ENCODE measurements at regions of chr15 and their contacts with region 1.

Region 1: GRCh38 chr15:100602064-100602822 is at the starts of genes ASB7 and LINS1:
- DNase-seq: peak; percentile 98 to 100 (median 100)
- ATAC-seq: peak; percentile 88 to 92 (median 88)
- H3K4me3 ChIP-seq: peak within 1 kb of the TSS; percentile 84 to 96
- H3K4me3 Mint-ChIP-seq: no peak within 1 kb of the TSS
- H3K27ac ChIP-seq: peak within 1 kb of the TSS; percentile 84
- H3K27ac Mint-ChIP-seq: peak within 1 kb of the TSS in 1 of 2 donors; percentile 87
- H3K4me1 ChIP-seq: peaks cover 37 to 46% of the 10 kb centered on the region in 2 experiments
- H3K4me1 Mint-ChIP-seq: peaks cover 62 to 68% (median 66%) of the 10 kb centered on the region in 3 donors
- H3K27me3 ChIP-seq: no peaks in the 10 kb centered on the region
- H3K27me3 Mint-ChIP-seq: no peaks in the 10 kb centered on the region
- total RNA-seq, gene ASB7: 17.7 to 24.8 (median 21.8) TPM
- total RNA-seq, gene LINS1: 42.9 to 88.1 (median 77.0) TPM

Region 2: GRCh38 chr15:100537331-100537730 is 64.9 kb before region 1 on chr15:
- CTCF ChIA-PET with region 1: no interaction called
- POLR2A ChIA-PET with region 1: no interaction called
- DNase-seq: peak in 1 of 35 experiments; percentile 16
- ATAC-seq: no peak
- H3K4me3 ChIP-seq: no peak overlapping the region
- H3K4me3 Mint-ChIP-seq: no peak overlapping the region
- H3K27ac ChIP-seq: no peak overlapping the region
- H3K27ac Mint-ChIP-seq: no peak overlapping the region
- H3K4me1 ChIP-seq: no peaks in the 10 kb centered on the region
- H3K4me1 Mint-ChIP-seq: peaks cover 0 to 3% (median 0%) of the 10 kb centered on the region in 3 donors
- H3K27me3 ChIP-seq: peaks cover 0 to 2% of the 10 kb centered on the region in 2 experiments
- H3K27me3 Mint-ChIP-seq: peaks cover 0 to 5% of the 10 kb centered on the region in 2 donors

Region 3: GRCh38 chr15:100572362-100572983 is 29.8 kb before region 1 on chr15:
- CTCF ChIA-PET with region 1: interaction called, 5 to 10 read pairs
- POLR2A ChIA-PET with region 1: interaction called in 1 of 2 experiments, 7 read pairs
- DNase-seq: peak in 1 of 35 experiments; percentile 52
- ATAC-seq: peak in 2 of 4 experiments; percentile 28 to 49
- H3K4me3 ChIP-seq: no peak overlapping the region
- H3K4me3 Mint-ChIP-seq: peak overlapping the region; percentile 58 to 73 (median 65)
- H3K27ac ChIP-seq: peak overlapping the region; percentile 51
- H3K27ac Mint-ChIP-seq: peak overlapping the region; percentile 94 to 96
- H3K4me1 ChIP-seq: peaks cover 17 to 24% of the 10 kb centered on the region in 2 experiments
- H3K4me1 Mint-ChIP-seq: peaks cover 63 to 69% (median 64%) of the 10 kb centered on the region in 3 donors
- H3K27me3 ChIP-seq: no peaks in the 10 kb centered on the region
- H3K27me3 Mint-ChIP-seq: no peaks in the 10 kb centered on the region